Stomach (tissue), 19 donors: ENCODE measurements at regions of chr7 and their contacts with region 1.

Region 1: DNA sequence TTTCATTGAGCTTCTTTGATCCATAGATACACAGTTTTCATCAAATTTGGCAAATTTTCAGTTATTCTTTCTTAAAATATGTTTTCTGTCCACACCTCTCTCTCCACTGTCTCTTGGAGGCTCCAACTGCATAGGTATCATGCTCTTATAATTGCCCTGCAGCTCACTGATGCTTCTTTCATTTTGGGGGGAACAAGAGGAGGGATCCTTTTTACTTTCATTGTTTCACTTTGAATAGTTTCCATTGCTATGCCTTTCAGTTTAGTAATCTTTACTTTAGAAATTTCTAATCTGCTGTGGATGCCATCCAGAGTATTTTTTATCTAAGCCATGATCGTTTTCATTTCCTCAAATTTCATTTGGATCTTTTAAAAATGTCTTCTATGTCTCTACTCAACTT is 32.9 kb downstream of the KBTBD2 start:
- DNase-seq: no peak
- H3K4me3 ChIP-seq: no peak overlapping the region
- H3K27ac ChIP-seq: no peak overlapping the region
- H3K4me1 ChIP-seq: no peaks in the 10 kb centered on the region
- H3K27me3 ChIP-seq: no peaks in the 10 kb centered on the region
- CTCF ChIP-seq: no peak
- EP300 ChIP-seq: no peak
- POLR2A ChIP-seq: no peak

Region 2: DNA sequence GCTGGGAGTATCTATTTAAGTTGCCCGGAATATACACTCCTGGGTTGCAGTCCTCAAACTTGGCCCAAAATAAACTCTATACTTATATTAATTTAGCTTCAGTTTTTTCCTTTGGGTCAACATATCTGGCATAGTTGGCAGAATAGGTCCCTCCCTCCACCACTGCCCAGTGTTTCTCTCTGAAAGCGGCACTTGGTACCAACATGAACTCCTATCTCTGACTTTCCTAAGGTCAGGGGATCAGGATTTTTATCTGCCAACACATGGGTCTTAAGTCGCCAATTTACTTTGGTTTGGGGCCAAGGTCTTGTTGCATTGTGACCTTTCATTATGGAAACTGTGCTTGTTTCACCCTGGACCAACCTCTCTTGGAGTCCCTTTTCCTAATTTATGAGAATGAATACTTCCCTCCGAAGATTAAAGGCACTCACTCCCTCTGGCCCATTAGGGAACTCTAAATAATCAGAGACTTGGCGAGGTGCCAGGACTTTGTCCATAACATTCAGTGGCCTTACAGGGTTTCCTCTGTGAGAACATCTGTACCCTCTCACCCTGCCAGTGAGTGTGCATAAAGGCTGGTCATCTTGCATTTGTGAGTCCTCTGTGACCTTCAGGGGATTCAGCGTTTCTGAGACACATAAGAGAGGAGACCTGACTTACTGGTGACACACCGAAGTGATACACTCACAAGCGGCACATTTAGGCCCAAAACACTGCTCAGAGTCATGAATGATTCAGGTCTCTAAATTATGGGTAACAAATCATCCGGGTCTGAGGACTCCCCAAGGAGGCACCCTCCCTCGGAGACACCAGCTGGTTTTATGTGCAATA is 78.9 kb after region 1 on chr7:
- intact Hi-C with region 1: loop called (anchors 10 kb)
- DNase-seq: peak; percentile 58 to 73
- H3K4me3 ChIP-seq: no peak overlapping the region
- H3K27ac ChIP-seq: peak overlapping the region; percentile 0 to 53 (median 46)
- H3K4me1 ChIP-seq: peaks cover 28 to 60% (median 41%) of the 10 kb centered on the region in 4 donors
- H3K27me3 ChIP-seq: no peaks in the 10 kb centered on the region
- CTCF ChIP-seq: no peak
- EP300 ChIP-seq: no peak
- POLR2A ChIP-seq: no peak